IMR-90 (cell line): ENCODE measurements at regions of chr1 and their contacts with region 1.

Region 1: DNA sequence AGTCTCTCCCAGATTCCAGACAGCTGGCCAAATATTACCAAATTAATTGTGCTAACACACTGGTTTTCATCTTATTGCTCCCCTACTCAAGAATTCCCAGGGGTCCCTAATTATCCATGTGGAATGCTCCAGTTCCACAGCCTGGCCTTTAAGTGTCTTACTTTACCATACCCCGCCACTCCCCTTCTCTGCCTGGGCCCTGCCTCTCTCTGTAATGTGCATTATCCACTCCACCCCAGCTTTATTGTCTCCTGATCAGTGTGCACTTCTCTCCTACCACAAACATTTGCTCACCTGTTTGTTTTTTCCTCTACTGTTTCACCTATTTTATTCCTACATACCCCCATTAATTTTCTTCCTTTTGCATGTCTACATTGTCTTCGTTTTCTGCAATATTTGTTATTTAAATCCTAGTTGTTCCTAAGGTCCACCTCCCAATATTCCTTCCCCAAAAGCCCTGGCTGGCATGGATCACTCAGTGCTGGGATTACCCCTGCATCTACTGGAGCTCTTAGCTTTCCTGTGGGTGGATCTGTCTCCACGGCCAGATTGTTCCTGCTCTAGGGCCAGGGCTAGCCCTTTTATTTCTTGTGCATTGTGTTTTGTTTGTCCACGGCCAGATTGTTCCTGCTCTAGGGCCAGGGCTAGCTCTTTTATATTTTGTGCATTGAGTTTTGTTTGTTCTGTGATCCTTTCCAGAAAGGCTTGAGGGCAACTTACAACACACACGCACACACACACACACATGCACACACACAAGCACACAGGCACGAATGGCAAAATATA is 33.4 kb upstream of the ATP1B1 start:
- DNase-seq: no peak
- ATAC-seq: no peak
- H3K4me3 ChIP-seq: no peak overlapping the region
- H3K27ac ChIP-seq: no peak overlapping the region
- H3K4me1 ChIP-seq: no peaks in the 10 kb centered on the region
- H3K27me3 ChIP-seq: peaks cover 2% of the 10 kb centered on the region; the same call in 1 of the 2 replicates
- CTCF ChIP-seq: no peak
- POLR2A ChIP-seq: no peak
- RAD21 ChIP-seq: no peak

Region 2: GRCh38 chr1:169012416-169012815 is 60.7 kb before region 1 on chr1:
- CTCF ChIA-PET with region 1: no interaction called
- POLR2A ChIA-PET with region 1: no interaction called
- dilution Hi-C with region 1: no loop called
- in situ Hi-C with region 1: loop called (anchors 10 kb)
- intact Hi-C with region 1: no loop called
- DNase-seq: no peak
- ATAC-seq: no peak
- H3K4me3 ChIP-seq: no peak overlapping the region
- H3K27ac ChIP-seq: no peak overlapping the region
- H3K4me1 ChIP-seq: no peaks in the 10 kb centered on the region
- H3K27me3 ChIP-seq: no peaks in the 10 kb centered on the region; the same call in 1 of the 2 replicates
- CTCF ChIP-seq: no peak
- POLR2A ChIP-seq: no peak
- RAD21 ChIP-seq: no peak